T-cell (primary cell): ENCODE measurements at regions of chr10 and their contacts with region 1.

Region 1: GRCh38 chr10:6409971-6410651 is 170.0 kb downstream of the PRKCQ start:
- DNase-seq: peak in 34 of 35 experiments; percentile 16 to 81 (median 54)
- ATAC-seq: peak; percentile 94 to 97 (median 96)
- H3K4me3 ChIP-seq: peak overlapping the region in 1 of 2 donors; percentile 22
- H3K4me3 Mint-ChIP-seq: peak overlapping the region; percentile 64 to 75 (median 65)
- H3K27ac ChIP-seq: peak overlapping the region; percentile 84
- H3K27ac Mint-ChIP-seq: peak overlapping the region; percentile 90 to 98
- H3K4me1 ChIP-seq: peaks cover 12 to 15% of the 10 kb centered on the region in 2 experiments
- H3K4me1 Mint-ChIP-seq: peaks cover 36 to 49% (median 48%) of the 10 kb centered on the region in 3 donors
- H3K27me3 ChIP-seq: no peaks in the 10 kb centered on the region
- H3K27me3 Mint-ChIP-seq: no peaks in the 10 kb centered on the region

Region 2: GRCh38 chr10:6130848-6131470 is 279.2 kb before region 1 on chr10:
- CTCF ChIA-PET with region 1: interaction called in 1 of 2 experiments, 11 read pairs
- POLR2A ChIA-PET with region 1: no interaction called
- DNase-seq: peak in 1 of 35 experiments; percentile 10
- ATAC-seq: no peak
- H3K4me3 ChIP-seq: no peak overlapping the region
- H3K4me3 Mint-ChIP-seq: no peak overlapping the region
- H3K27ac ChIP-seq: no peak overlapping the region
- H3K27ac Mint-ChIP-seq: no peak overlapping the region
- H3K4me1 ChIP-seq: peaks cover 5 to 43% of the 10 kb centered on the region in 2 experiments
- H3K4me1 Mint-ChIP-seq: peaks cover 29 to 45% (median 40%) of the 10 kb centered on the region in 3 donors
- H3K27me3 ChIP-seq: peaks cover 0 to 26% of the 10 kb centered on the region in 2 experiments
- H3K27me3 Mint-ChIP-seq: peaks cover 2 to 3% of the 10 kb centered on the region in 2 donors

Region 3: DNA sequence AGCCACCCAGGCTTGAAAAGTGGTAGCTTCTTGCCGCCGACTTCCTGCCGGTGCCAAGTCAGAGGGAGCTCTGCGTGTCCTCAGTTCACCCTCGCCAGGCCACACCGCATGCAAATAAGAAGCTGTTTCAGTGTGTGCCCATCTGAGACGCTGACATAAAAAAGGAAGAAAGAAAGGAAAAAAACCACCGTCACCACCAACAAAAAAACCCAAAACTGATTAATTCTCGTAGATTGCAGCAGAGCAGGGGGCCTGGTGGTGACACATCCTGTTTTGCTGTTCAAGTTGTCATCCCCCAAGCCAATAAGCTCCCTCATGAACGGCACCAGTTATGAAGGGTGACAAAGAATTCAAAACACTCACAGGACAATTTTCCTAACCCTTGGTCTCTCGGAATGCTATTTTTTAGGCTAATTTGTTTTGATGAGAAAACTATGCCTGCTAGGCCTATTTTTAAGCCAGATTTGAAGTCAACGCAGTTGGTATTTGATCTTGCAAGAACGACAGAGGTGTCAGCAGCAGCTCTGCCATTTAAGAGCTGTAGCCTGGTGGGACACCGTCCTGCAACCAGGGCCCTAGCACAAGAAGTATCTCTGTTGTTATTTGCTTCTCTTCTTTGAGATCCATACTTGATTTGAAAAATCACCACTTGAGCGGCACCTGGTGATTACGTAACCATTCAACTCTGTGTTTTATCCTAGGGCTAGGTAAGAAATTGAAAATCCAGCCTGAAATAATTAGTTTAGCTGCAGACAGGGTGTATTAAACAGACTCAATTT is 61.8 kb before region 1 on chr10:
- CTCF ChIA-PET with region 1: interaction called, 3 to 11 read pairs
- POLR2A ChIA-PET with region 1: interaction called, 3 to 5 read pairs
- DNase-seq: peak; percentile 53 to 95 (median 85)
- ATAC-seq: peak; percentile 91 to 94 (median 92)
- H3K4me3 ChIP-seq: peak overlapping the region in 1 of 2 donors; percentile 27
- H3K4me3 Mint-ChIP-seq: peak overlapping the region; percentile 74 to 76 (median 75)
- H3K27ac ChIP-seq: peak overlapping the region; percentile 89
- H3K27ac Mint-ChIP-seq: peak overlapping the region; percentile 97
- H3K4me1 ChIP-seq: peaks cover 21 to 27% of the 10 kb centered on the region in 2 experiments
- H3K4me1 Mint-ChIP-seq: peaks cover 62 to 64% (median 62%) of the 10 kb centered on the region in 3 donors
- H3K27me3 ChIP-seq: no peaks in the 10 kb centered on the region
- H3K27me3 Mint-ChIP-seq: no peaks in the 10 kb centered on the region

Region 4: DNA sequence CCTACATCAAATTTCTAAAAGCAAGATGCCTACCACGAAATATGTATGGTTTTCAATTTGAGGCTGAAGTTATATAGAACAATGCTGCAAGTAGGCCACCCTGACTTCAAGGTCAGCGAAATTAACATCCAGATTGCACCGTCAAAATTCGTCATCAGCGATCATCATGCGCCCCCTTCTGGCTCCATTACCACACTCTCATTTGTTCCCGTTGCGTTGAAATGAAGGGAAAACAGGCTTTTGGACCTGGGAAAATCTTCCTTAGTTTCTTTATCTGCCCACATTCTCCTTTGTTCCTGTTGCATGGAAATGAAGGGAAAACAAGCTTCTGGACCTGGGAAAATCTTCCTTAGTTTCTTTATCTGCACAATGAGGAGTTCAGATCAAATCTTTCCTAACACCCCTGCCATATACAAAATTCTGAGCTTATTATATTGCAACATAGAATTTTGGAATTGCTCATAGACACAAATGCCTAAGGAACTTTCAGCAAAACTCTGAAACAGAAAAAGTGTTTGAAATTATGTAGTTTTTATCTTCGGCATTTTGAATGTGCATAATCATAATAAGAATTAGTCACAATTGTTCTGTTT is 268.2 kb after region 1 on chr10:
- CTCF ChIA-PET with region 1: interaction called in 1 of 2 experiments, 10 read pairs
- POLR2A ChIA-PET with region 1: no interaction called
- DNase-seq: peak in 34 of 35 experiments; percentile 6 to 82 (median 45)
- ATAC-seq: peak; percentile 59 to 65 (median 62)
- H3K4me3 ChIP-seq: no peak overlapping the region
- H3K4me3 Mint-ChIP-seq: no peak overlapping the region
- H3K27ac ChIP-seq: no peak overlapping the region
- H3K27ac Mint-ChIP-seq: no peak overlapping the region
- H3K4me1 ChIP-seq: no peaks in the 10 kb centered on the region
- H3K4me1 Mint-ChIP-seq: peaks cover 0 to 6% (median 4%) of the 10 kb centered on the region in 3 donors
- H3K27me3 ChIP-seq: no peaks in the 10 kb centered on the region
- H3K27me3 Mint-ChIP-seq: peaks cover 0 to 11% of the 10 kb centered on the region in 2 donors